CD4-positive, alpha-beta T cell (primary cell): ENCODE measurements at regions of chr10 and their contacts with region 1.

Region 1: GRCh38 chr10:119542988-119543813 is 682 bp upstream of the RGS10 start:
- DNase-seq: peak; percentile 47 to 85 (median 63)
- ATAC-seq: peak; percentile 48
- H3K4me3 ChIP-seq: peak overlapping the region; percentile 92
- H3K4me3 Mint-ChIP-seq: peak overlapping the region; percentile 98
- H3K27ac ChIP-seq: peak overlapping the region in 1 of 2 donors; percentile 84
- H3K27ac Mint-ChIP-seq: peak overlapping the region; percentile 88
- H3K4me1 ChIP-seq: peaks cover 40% of the 10 kb centered on the region
- H3K4me1 Mint-ChIP-seq: peaks cover 41% of the 10 kb centered on the region
- H3K27me3 ChIP-seq: no peaks in the 10 kb centered on the region
- H3K27me3 Mint-ChIP-seq: no peaks in the 10 kb centered on the region
- CTCF ChIP-seq: peak; percentile 85

Region 2: GRCh38 chr10:119199231-119199992 is 343.8 kb before region 1 on chr10:
- CTCF ChIA-PET with region 1: interaction called, 6 read pairs
- POLR2A ChIA-PET with region 1: interaction called, 3 read pairs
- intact Hi-C with region 1: loop called in 1 of 2 experiments (anchors 2 kb)
- DNase-seq: peak in 13 of 14 experiments; percentile 14 to 80 (median 45)
- ATAC-seq: peak; percentile 97
- H3K4me3 ChIP-seq: no peak overlapping the region
- H3K4me3 Mint-ChIP-seq: no peak overlapping the region
- H3K27ac ChIP-seq: no peak overlapping the region
- H3K27ac Mint-ChIP-seq: no peak overlapping the region
- H3K4me1 ChIP-seq: peaks cover 4% of the 10 kb centered on the region
- H3K4me1 Mint-ChIP-seq: peaks cover 5% of the 10 kb centered on the region
- H3K27me3 ChIP-seq: no peaks in the 10 kb centered on the region
- H3K27me3 Mint-ChIP-seq: no peaks in the 10 kb centered on the region
- CTCF ChIP-seq: peak; percentile 70

Region 3: GRCh38 chr10:119478111-119478802 is 64.9 kb before region 1 on chr10:
- CTCF ChIA-PET with region 1: interaction called, 7 read pairs
- POLR2A ChIA-PET with region 1: interaction called, 10 read pairs
- intact Hi-C with region 1: loop called in 1 of 2 experiments (anchors 2 kb)
- DNase-seq: peak in 6 of 14 experiments; percentile 7 to 55 (median 44)
- ATAC-seq: peak; percentile 51
- H3K4me3 ChIP-seq: no peak overlapping the region
- H3K4me3 Mint-ChIP-seq: peak overlapping the region; percentile 55
- H3K27ac ChIP-seq: peak overlapping the region in 1 of 2 donors; percentile 7
- H3K27ac Mint-ChIP-seq: peak overlapping the region; percentile 35
- H3K4me1 ChIP-seq: peaks cover 31% of the 10 kb centered on the region
- H3K4me1 Mint-ChIP-seq: peaks cover 34% of the 10 kb centered on the region
- H3K27me3 ChIP-seq: no peaks in the 10 kb centered on the region
- H3K27me3 Mint-ChIP-seq: no peaks in the 10 kb centered on the region
- CTCF ChIP-seq: no peak

Region 4: DNA sequence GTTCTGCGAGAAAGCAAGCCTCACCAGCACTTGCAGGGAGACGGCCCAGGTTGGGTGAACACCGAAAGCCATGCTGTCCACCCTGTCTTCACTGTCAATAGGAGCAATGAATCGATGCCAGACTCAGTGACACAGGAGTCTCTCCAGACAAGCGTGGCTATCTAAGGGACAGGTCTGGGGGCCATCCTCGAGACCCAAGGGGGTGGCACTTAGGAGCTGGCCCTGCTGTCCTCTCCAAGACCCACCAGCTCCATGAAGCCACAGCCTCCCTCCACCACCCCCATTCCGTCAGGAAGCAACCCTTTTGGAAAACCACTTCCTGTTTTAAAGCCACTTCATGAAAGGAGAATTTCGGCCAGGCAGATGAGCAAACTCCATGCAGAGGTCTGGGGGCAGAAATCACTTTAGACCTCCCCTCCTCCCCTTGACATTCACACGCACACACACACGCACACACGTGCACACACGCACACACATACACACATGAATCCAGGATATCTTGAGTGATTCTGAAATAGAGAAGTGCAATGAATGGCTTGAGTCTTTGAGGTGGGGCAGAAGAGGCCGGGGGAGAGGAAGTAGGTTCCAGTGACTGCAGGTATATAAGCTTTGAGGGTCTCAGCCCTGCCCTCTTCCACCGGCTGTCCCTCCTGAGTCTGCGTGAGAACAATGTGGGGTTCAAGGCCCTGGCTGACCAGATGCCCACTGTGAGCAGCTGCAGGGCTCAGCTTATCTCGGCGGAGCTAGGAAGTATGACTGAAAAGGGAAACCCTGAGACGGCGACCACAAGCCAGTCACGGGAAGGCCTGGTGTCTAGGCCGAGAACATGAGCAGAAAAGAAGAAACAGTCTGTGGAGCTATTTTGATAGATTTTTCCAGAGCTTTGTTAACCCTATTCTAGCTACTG is 25.7 kb before region 1 on chr10:
- CTCF ChIA-PET with region 1: interaction called, 12 read pairs
- POLR2A ChIA-PET with region 1: interaction called, 138 read pairs
- intact Hi-C with region 1: loop called (anchors 1 to 2 kb)
- DNase-seq: peak in 10 of 14 experiments; percentile 38 to 80 (median 51)
- ATAC-seq: peak; percentile 22
- H3K4me3 ChIP-seq: peak overlapping the region; percentile 27
- H3K4me3 Mint-ChIP-seq: peak overlapping the region; percentile 86
- H3K27ac ChIP-seq: peak overlapping the region; percentile 71 to 91
- H3K27ac Mint-ChIP-seq: peak overlapping the region; percentile 98
- H3K4me1 ChIP-seq: peaks cover 64% of the 10 kb centered on the region
- H3K4me1 Mint-ChIP-seq: peaks cover 76% of the 10 kb centered on the region
- H3K27me3 ChIP-seq: no peaks in the 10 kb centered on the region
- H3K27me3 Mint-ChIP-seq: no peaks in the 10 kb centered on the region
- CTCF ChIP-seq: no peak

Region 5: DNA sequence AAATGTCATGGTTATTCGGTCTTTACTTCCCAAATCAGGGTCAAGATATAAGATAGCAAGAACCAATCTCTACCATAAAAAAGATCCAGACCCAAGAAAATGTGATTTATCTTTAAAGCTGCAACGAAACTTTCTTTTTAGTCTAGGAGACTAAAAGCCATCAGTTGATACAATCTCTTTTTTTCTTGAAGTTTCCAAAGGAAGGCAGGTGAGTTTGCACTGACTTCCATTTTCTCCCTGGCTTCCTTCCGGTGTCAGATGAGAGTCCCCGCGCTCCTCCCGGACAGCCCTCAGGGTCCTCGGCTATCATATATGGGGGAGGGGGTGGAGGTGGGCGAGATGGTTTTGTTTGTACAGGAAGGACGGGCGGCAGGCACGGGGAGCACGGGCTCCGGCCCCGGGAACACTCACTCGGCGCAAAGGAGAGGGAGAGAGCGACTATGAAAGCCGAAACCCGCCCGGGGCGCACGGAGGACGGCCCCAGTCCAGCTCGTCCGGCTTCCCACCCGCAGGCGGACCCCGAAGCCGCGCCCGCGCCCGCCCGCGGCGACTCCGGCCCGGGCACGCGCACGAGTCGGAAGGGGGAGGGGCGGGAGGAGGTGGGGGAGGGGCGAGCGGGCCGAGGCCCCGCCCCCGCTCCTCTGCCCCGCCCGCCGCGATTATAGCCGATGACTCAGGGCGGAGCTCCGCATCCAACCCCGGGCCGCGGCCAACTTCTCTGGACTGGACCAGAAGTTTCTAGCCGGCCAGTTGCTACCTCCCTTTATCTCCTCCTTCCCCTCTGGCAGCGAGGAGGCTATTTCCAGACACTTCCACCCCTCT is 107.7 kb after region 1 on chr10 and contains the start of gene BAG3:
- CTCF ChIA-PET with region 1: interaction called, 9 read pairs
- POLR2A ChIA-PET with region 1: interaction called, 16 read pairs
- intact Hi-C with region 1: loop called (anchors 1 to 5 kb)
- DNase-seq: peak; percentile 60 to 89 (median 76)
- ATAC-seq: peak; percentile 52
- H3K4me3 ChIP-seq: peak within 1 kb of the TSS; percentile 72
- H3K4me3 Mint-ChIP-seq: peak within 1 kb of the TSS; percentile 100
- H3K27ac ChIP-seq: peak within 1 kb of the TSS; percentile 77 to 88
- H3K27ac Mint-ChIP-seq: peak within 1 kb of the TSS; percentile 99
- H3K4me1 ChIP-seq: peaks cover 27% of the 10 kb centered on the region
- H3K4me1 Mint-ChIP-seq: peaks cover 49% of the 10 kb centered on the region
- H3K27me3 ChIP-seq: no peaks in the 10 kb centered on the region
- H3K27me3 Mint-ChIP-seq: no peaks in the 10 kb centered on the region
- CTCF ChIP-seq: no peak
- total RNA-seq, gene BAG3: 65.1 to 65.8 TPM